ENCODE measurements at regions of chr15 and their contacts with region 1.

Region 1: DNA sequence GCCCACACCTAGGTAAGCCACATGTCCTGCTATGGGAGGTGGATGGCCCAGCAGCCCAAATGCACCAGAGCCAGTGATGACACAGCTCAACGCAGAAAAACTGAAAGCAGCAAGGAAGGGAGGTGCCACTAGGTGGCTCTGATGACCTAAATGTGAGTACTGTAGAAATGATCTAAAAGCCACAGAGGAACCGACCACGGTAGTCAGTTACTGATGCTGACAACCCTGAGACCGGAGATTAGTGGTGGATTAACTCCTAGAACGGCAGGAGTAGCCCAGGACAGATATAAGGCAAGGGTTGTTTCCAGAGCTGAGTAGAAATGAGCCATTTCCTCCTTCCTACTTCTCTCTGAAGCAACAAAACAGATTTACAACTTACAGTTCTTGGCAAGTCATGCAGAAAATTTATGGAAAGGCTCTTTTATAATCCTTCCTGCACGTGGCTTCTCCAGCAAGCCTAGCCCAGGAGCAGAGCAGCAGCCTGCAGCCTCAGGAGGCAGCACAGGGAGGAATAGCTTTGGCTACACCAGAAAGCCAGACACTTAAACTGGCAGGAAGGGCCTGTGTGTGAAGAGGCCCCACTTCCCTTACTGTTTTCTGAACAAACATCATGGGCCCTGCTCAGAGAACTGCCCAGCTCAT is 13.1 kb downstream of the FBXL22 start:
- DNase-seq: peak; percentile 83 to 91 (median 91)
- H3K4me3 ChIP-seq: peak overlapping the region in 1 of 7 experiments; percentile 7
- H3K27ac ChIP-seq: peak overlapping the region; percentile 34 to 72
- H3K4me1 ChIP-seq: peaks cover 11 to 42% (median 35%) of the 10 kb centered on the region in 4 experiments
- H3K27me3 ChIP-seq: no peaks in the 10 kb centered on the region

Region 2: GRCh38 chr15:63623232-63623969 is 13.1 kb after region 1 on chr15:
- CTCF ChIA-PET with region 1: interaction called, 12 read pairs
- POLR2A ChIA-PET with region 1: no interaction called
- DNase-seq: no peak
- H3K4me3 ChIP-seq: no peak overlapping the region
- H3K27ac ChIP-seq: no peak overlapping the region
- H3K4me1 ChIP-seq: no peaks in the 10 kb centered on the region
- H3K27me3 ChIP-seq: no peaks in the 10 kb centered on the region

Region 3: DNA sequence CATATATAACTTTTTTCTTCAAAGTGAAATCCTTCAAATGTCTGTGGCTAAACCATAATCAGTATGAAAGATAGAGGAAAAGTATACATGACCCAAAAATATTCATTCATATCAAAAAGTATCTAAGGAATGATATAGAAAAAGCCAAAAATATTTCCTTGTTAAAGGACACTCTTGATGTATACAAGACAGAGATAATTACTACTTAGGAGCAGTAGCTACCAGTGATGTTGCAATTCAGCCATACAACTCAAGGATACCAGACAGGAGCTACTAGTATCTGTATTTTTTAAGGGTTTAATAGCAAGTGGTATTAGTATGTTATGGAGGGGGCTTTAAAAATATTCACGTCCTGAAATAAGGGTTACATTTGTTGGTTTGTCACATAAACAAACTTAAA is 23.8 kb after region 1 on chr15:
- CTCF ChIA-PET with region 1: interaction called, 10 read pairs
- POLR2A ChIA-PET with region 1: interaction called, 4 read pairs
- DNase-seq: no peak
- H3K4me3 ChIP-seq: no peak overlapping the region
- H3K27ac ChIP-seq: no peak overlapping the region
- H3K4me1 ChIP-seq: no peaks in the 10 kb centered on the region
- H3K27me3 ChIP-seq: no peaks in the 10 kb centered on the region